H1 (cell line): ENCODE measurements at regions of chr1 and their contacts with region 1.

Region 1: DNA sequence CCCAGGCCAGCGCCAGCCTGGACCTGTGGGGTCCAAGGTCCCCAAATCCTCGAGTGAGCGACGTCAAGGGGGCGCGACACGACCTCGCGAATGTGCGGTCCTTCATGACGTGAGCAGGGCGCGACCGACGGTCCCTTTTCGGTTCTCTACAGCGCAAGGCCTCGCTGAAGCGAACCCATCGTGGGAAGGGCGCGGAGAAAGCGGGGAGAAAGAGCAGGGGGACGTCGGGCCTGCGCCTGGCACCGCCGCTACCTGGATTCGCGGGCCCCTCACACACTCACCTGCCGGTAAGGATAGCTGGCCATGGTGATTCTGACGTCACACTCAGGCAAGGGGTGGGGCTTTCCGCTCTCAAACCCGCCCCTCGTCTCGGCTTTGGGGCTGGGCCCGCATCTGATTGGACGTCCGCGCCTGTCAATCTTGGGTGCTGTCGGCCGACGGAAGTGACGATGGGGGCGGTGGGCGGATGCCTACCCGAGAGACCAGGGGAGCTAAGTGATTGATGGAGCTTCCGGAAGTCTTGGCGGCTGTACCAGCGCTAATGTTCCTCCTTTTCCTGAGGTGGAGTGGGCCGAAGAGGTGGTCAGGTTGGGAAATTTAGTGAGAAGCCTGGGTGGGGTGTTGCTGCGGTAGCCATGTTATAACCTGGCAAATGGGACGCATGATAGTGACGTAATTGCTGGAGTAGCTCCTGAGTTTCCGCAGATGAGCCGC is at the start of gene PEF1:
- DNase-seq: peak; percentile 91 to 99
- H3K4me3 ChIP-seq: peak within 1 kb of the TSS; percentile 89 to 97 (median 93)
- H3K27ac ChIP-seq: peak within 1 kb of the TSS; percentile 100
- H3K4me1 ChIP-seq: peaks cover 5 to 17% (median 6%) of the 10 kb centered on the region in 4 experiments
- H3K27me3 ChIP-seq: no peaks in the 10 kb centered on the region
- CTCF ChIP-seq: no peak
- EP300 ChIP-seq: no peak
- POLR2A ChIP-seq: peak in 1 of 2 experiments; percentile 72; a peak in 2 of 3 replicates
- RAD21 ChIP-seq: no peak
- total RNA-seq, gene PEF1: 35.2 and 38.8 TPM in 2 replicates

Region 2: GRCh38 chr1:31266547-31266946 is 378.2 kb before region 1 on chr1:
- CTCF ChIA-PET with region 1: no interaction called
- POLR2A ChIA-PET with region 1: no interaction called
- DNase-seq: no peak
- H3K4me3 ChIP-seq: no peak overlapping the region
- H3K27ac ChIP-seq: no peak overlapping the region
- H3K4me1 ChIP-seq: no peaks in the 10 kb centered on the region
- H3K27me3 ChIP-seq: no peaks in the 10 kb centered on the region
- CTCF ChIP-seq: no peak
- EP300 ChIP-seq: no peak
- POLR2A ChIP-seq: no peak
- RAD21 ChIP-seq: no peak

Region 3: GRCh38 chr1:31633053-31633452 is 11.7 kb before region 1 on chr1:
- CTCF ChIA-PET with region 1: interaction called, 30 read pairs
- POLR2A ChIA-PET with region 1: interaction called, 31 read pairs
- DNase-seq: peak in 1 of 2 experiments; percentile 85
- H3K4me3 ChIP-seq: no peak overlapping the region
- H3K27ac ChIP-seq: no peak overlapping the region
- H3K4me1 ChIP-seq: no peaks in the 10 kb centered on the region
- H3K27me3 ChIP-seq: no peaks in the 10 kb centered on the region
- CTCF ChIP-seq: peak; percentile 71 to 88 (median 84)
- EP300 ChIP-seq: no peak
- POLR2A ChIP-seq: no peak
- RAD21 ChIP-seq: peak; percentile 51 to 61

Region 4: DNA sequence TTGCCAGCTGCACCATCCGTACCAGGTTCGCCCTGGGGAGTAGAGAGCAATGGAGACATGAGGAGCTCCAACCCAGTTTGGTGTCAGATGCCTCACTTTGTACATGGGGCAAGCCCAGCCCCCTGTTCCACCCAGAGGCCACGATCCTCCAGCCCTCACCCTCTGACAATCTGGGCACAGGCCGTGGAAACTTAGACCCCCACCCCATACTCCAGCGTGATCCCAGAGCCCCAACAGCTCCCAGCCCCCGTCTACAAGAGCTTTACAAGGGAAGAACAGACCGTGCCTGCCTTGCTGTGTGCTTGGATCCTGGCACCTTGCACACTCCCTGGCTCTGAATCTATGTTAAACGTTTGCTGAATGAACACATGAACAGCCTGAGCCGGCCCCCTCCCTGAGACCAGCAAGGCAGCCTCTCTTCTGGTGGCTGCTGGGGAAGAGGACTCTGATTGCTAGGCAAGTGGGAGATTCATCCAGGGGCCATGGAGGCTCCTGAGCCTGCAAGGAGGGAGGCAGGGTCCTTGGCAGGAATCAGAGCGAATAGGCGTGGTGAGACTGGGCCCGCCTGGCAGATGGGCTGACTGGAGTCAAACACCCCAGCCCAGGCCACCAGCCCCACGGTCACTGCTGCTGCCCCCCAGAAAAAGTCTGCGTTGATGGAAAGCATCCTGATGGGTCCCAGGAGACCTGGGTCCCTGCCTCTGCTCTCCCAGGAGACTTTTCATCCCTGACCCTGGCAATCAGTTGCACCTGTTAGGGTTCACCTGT is 12.5 kb after region 1 on chr1:
- CTCF ChIA-PET with region 1: interaction called, 52 read pairs
- POLR2A ChIA-PET with region 1: interaction called, 12 read pairs
- DNase-seq: no peak
- H3K4me3 ChIP-seq: no peak overlapping the region
- H3K27ac ChIP-seq: no peak overlapping the region
- H3K4me1 ChIP-seq: no peaks in the 10 kb centered on the region
- H3K27me3 ChIP-seq: no peaks in the 10 kb centered on the region
- CTCF ChIP-seq: no peak
- EP300 ChIP-seq: no peak
- POLR2A ChIP-seq: no peak
- RAD21 ChIP-seq: no peak